ENCODE measurements at regions of chr2 and their contacts with region 1.

Region 1: GRCh38 chr2:68203587-68203986 is 45.9 kb downstream of the PNO1 start:
- DNase-seq: no peak
- ATAC-seq: no peak

Region 2: GRCh38 chr2:68238955-68239822 is 35.6 kb after region 1 on chr2:
- intact Hi-C with region 1: loop called (anchors 5 to 10 kb)
- DNase-seq: no peak
- ATAC-seq: peak in 1 of 2 donors; percentile 26

Region 3: DNA sequence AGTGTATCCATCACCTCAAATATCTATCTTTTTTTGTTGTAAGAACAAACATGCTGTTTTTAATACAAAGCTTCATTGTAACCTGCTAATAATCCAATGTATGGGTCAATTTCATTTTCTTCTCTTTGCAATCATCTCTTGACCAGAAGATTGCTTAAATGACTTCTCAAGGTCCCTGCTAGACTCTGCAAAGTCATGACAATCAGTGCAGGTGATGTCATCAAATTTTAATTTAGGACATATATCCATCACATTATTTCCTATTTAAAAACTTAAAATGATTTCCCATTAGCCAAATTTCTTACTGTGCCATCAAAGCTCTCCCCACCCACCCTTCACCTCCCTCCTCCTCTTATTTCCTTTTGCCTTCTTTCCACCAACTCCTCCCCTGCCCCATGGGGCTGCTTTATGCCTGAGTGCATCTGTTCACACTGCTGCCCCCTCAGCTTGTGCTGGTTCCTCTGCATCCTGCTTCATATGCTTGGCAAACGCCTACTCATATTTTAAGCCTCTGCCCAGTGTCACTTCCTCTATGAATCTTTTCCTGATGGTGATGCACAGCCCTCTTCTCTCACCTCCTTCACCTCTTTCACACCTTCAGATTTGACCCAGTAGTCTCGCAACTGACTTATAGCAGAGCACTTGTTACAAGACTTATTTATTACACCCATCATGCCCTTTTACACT is 181.8 kb after region 1 on chr2:
- intact Hi-C with region 1: no loop called
- DNase-seq: no peak
- ATAC-seq: no peak

Measured in left cardiac atrium (tissue), 4 donors.